ENCODE measurements at regions of chr14 and their contacts with region 1.

Region 1: DNA sequence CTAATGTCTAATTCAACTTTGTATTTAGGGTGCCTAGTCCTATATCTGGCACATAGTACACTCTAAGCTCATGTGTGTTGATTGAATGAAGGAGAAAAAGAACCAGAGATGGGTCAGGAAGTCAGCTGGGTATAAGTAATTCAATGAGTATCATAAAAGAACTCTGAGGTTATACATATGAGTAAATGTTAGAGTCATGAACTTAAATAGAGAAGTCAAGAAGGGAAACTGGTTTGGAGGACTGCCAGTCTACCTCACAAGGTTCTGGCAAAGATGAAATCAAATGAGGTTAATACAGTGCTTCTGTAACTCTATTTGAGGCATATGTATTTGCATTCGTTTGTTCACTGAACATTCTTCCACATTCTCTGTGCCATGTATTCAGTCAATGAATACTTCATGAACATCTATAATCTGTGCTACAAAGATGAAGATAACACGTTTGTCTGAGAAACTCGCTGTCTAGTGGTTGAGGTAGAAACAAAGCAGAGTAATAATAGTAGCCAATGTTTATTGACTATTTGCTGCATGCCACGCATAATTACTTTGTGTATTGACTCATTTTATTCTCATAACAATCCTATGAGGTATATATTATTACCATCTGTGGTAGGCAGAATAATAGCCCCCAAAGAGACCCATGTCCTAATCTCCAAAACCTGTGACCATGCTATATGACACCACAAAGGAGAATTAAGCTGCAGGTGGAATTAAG is 88.9 kb downstream of the PTGER2 start:
- DNase-seq: no peak
- ATAC-seq: peak; percentile 31
- H3K4me3 Mint-ChIP-seq: no peak overlapping the region
- H3K27ac Mint-ChIP-seq: peak overlapping the region; percentile 61
- H3K4me1 Mint-ChIP-seq: peaks cover 72% of the 10 kb centered on the region
- H3K27me3 Mint-ChIP-seq: no peaks in the 10 kb centered on the region

Region 2: DNA sequence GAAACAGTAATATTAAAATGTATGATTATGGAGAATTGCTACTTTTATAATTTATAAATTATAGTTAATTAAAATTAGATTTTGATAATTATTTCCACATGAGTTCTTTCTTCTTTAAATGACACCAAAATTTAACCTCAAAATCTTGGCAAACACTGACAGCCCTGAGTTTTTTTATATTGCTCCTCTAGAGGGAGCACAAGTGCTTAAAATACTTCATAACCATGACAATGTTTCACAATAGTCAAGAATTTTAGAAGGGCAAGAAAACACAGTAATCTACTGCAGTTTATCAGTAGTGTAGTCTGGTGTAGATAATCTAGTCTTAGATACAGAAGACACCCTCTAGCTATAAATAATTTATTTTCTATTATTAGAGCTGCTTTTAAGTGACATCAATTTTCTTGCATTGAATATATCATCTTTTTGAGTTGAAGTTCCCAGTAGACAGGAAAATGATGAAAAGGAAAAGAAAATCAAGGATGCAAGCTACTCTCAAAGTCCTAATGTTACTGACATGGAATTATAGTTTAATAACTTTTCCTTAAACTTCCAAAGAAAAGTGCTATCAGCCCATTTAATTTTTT is 103.2 kb before region 1 on chr14:
- CTCF ChIA-PET with region 1: interaction called, 20 read pairs
- POLR2A ChIA-PET with region 1: no interaction called
- DNase-seq: no peak
- ATAC-seq: peak; percentile 73
- H3K4me3 Mint-ChIP-seq: no peak overlapping the region
- H3K27ac Mint-ChIP-seq: no peak overlapping the region
- H3K4me1 Mint-ChIP-seq: peaks cover 60% of the 10 kb centered on the region
- H3K27me3 Mint-ChIP-seq: no peaks in the 10 kb centered on the region

Region 3: DNA sequence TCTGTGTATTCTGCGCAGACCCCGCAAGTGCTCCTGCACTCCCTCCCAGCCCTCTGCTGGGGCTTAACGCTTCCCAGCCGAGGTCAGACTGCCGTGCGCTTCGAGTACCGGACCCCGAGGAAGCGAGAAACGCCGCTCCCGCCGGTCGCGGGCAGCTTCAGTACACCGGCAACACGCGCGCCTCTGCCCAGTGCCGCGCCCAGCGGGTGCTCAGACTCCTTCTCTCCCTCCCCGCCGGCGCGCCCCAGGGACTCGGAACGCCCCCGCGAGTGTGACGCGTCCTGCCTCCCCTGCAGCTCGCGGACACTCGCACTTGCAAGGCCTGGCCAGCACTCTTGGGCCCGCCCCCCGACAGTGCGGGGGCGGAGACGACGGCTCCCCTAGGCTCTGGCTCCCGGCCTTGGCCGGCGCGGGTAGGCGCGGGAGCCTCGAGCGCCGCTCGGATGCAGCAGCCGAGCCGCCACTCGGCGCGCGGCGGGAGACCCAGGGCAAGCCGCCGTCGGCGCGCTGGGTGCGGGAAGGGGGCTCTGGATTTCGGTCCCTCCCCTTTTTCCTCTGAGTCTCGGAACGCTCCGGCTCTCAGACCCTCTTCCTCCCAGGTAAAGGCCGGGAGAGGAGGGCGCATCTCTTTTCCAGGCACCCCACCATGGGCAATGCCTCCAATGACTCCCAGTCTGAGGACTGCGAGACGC is 88.9 kb before region 1 on chr14 and contains the start of gene PTGER2:
- CTCF ChIA-PET with region 1: interaction called, 63 read pairs
- POLR2A ChIA-PET with region 1: interaction called, 30 read pairs
- DNase-seq: peak; percentile 95
- ATAC-seq: peak; percentile 83
- H3K4me3 Mint-ChIP-seq: peak within 1 kb of the TSS; percentile 97
- H3K27ac Mint-ChIP-seq: peak within 1 kb of the TSS; percentile 98
- H3K4me1 Mint-ChIP-seq: peaks cover 55% of the 10 kb centered on the region
- H3K27me3 Mint-ChIP-seq: no peaks in the 10 kb centered on the region
- total RNA-seq, gene PTGER2: 116 to 119 TPM

Region 4: GRCh38 chr14:52325126-52325525 is 77.8 kb before region 1 on chr14:
- CTCF ChIA-PET with region 1: interaction called, 14 read pairs
- POLR2A ChIA-PET with region 1: interaction called, 3 read pairs
- DNase-seq: peak; percentile 59
- ATAC-seq: peak; percentile 90
- H3K4me3 Mint-ChIP-seq: peak overlapping the region; percentile 46
- H3K27ac Mint-ChIP-seq: peak overlapping the region; percentile 83
- H3K4me1 Mint-ChIP-seq: peaks cover 95% of the 10 kb centered on the region
- H3K27me3 Mint-ChIP-seq: no peaks in the 10 kb centered on the region

Region 5: GRCh38 chr14:52351233-52352060 is 51.5 kb before region 1 on chr14:
- CTCF ChIA-PET with region 1: interaction called, 48 read pairs
- POLR2A ChIA-PET with region 1: interaction called, 18 read pairs
- DNase-seq: peak; percentile 39
- ATAC-seq: peak; percentile 76
- H3K4me3 Mint-ChIP-seq: peak overlapping the region; percentile 80
- H3K27ac Mint-ChIP-seq: peak overlapping the region; percentile 99
- H3K4me1 Mint-ChIP-seq: peaks cover 78% of the 10 kb centered on the region
- H3K27me3 Mint-ChIP-seq: no peaks in the 10 kb centered on the region

Region 6: GRCh38 chr14:52363961-52364360 is 39.0 kb before region 1 on chr14:
- CTCF ChIA-PET with region 1: interaction called, 21 read pairs
- POLR2A ChIA-PET with region 1: no interaction called
- DNase-seq: no peak
- ATAC-seq: no peak
- H3K4me3 Mint-ChIP-seq: no peak overlapping the region
- H3K27ac Mint-ChIP-seq: no peak overlapping the region
- H3K4me1 Mint-ChIP-seq: peaks cover 15% of the 10 kb centered on the region
- H3K27me3 Mint-ChIP-seq: no peaks in the 10 kb centered on the region

Region 7: DNA sequence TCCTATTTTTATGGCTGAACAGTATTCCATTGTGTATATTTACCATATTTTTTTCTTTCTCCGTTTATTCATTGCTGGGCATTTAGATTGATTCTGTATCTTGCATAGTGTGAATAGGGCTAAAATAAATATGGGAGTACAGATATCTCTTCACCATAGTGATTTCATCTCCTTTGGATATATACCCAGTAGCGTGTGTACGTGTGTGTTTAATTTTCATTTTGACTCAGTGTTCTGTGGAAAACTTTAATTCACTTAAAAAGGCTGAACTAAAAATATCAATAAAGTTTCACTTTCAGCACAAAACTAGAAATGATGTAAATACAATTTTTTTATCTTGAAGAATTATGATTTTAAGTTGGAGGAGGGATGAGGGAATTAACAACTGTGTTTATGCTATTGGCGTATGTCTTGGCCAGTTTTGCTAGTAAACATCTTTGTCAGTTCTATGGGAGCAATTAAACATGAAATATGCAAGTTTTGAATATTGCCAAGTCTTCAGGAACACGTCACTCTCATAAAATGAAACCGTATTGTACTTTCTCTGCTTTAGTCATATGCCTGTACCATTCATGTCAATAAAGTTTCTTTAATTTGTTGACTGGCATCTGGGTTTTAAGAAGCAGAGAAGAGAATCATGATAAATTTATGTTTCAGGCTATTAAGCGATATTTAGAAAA is 10.9 kb after region 1 on chr14:
- CTCF ChIA-PET with region 1: interaction called, 23 read pairs
- POLR2A ChIA-PET with region 1: interaction called, 6 read pairs
- DNase-seq: no peak
- ATAC-seq: peak; percentile 66
- H3K4me3 Mint-ChIP-seq: peak overlapping the region; percentile 61
- H3K27ac Mint-ChIP-seq: peak overlapping the region; percentile 78
- H3K4me1 Mint-ChIP-seq: peaks cover 47% of the 10 kb centered on the region
- H3K27me3 Mint-ChIP-seq: no peaks in the 10 kb centered on the region

Region 8: DNA sequence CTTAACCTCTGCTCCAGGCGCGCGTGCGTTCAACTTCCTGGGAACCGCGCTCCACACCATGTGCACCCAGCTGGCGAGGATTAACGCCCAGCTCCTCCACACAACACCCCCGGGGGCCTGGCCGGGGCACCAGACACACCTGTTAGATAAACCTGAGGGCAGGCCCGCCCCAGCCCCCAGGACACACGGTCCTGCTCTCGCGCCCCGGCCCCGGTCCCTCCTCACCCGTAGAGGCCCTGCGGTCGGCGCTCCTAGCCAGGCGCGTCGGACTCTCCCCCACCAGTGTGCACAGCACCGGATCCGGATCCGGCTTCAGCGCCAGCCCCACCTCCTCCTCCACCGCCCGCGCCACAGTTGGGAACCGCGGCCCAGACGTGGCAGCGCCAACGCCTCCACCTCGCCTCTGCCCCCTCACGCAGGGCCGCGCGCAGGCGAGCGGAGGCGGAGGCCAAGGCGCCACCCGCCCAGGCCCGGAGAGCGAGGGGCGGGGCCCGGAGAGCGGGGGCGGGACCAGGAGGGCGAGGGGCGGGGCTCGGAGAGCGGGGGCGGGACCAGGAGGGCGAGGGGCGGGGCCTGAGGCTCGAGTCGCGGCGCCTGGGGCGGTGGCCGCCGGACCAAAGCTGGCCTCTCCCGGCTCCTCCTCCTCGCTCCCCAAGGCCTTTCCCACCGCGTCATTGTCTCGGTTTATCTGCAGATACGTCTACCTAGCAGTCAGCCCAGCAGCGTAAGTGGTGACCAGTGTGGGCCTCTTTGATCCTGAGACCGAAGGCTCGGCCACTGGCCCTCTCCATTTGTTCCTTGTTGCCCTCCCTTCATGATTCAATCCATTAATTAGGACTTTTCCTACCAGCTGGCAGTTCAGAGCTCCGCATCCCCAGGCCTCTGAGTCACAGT is 388.5 kb after region 1 on chr14 and contains the start of gene GNPNAT1:
- CTCF ChIA-PET with region 1: no interaction called
- POLR2A ChIA-PET with region 1: no interaction called
- DNase-seq: peak; percentile 92
- ATAC-seq: peak; percentile 99
- H3K4me3 Mint-ChIP-seq: peak within 1 kb of the TSS; percentile 86
- H3K27ac Mint-ChIP-seq: peak within 1 kb of the TSS; percentile 76
- H3K4me1 Mint-ChIP-seq: peaks cover 33% of the 10 kb centered on the region
- H3K27me3 Mint-ChIP-seq: no peaks in the 10 kb centered on the region
- total RNA-seq, gene GNPNAT1: 14.9 to 16.3 TPM